ENCODE measurements at regions of chr18 and their contacts with region 1.

Region 1: DNA sequence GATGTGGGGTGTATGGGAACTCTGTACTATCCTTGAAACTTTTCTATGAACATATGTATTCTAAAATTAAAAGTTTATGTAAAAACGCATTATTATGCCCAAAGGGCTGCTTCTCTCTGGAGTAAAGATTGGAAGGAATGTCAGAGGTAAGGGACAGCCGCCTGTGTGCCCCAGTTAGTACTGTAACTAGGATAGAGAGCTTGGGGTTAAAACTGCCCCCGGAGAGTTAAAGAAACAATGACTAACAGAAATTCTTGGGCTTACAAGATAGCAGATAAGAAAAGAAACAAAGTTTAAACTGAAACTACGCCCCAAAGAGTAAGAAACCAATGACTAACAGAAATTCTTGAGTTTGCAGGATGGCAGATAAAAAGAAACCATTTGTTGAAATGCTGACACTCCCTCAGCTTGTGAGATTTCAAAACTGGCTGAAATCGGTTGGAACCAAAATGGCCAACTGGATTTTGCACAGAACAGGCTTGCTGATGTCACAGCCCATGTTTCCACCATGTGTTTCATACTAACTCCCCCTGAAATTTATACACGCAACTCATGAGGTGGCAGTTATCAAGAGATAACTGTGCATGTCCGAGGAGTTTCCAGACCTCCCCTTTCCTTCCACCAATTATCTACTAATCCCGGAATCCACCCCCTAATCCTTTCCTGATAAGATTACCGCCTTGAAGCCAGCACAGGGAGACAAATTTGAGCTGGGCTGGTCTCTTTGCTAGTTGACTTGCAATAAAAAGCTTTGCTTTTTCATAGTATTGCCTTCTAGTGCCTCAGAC is 8.7 kb upstream of the TXNDC2 start:
- DNase-seq: no peak

Region 2: GRCh38 chr18:9913526-9914333 is 36.7 kb after region 1 on chr18 and contains the start of gene VAPA:
- intact Hi-C with region 1: loop called (anchors 5 kb)
- DNase-seq: peak; percentile 98
- total RNA-seq, gene VAPA: 232 TPM